Activated T-helper 2 cell treated with anti-CD3 and anti-CD28 coated beads, Interferon-gamma antibody, Interleukin-2, Interleukin-4, amounts not matched to agents 10 μg/mL and 5 μg/mL and 100 μg/mL, durations not matched to agents 14 hours and 24 hours and 36 hours (primary cell): ENCODE measurements at regions of chr6 and their contacts with region 1.

Region 1: GRCh38 chr6:169654598-169655391 is 47.0 kb downstream of the WDR27 start:
- DNase-seq: peak; percentile 71
- H3K4me3 Mint-ChIP-seq: peak overlapping the region; percentile 87
- H3K27ac Mint-ChIP-seq: peak overlapping the region; percentile 64
- H3K4me1 Mint-ChIP-seq: peaks cover 6% of the 10 kb centered on the region
- H3K27me3 Mint-ChIP-seq: no peaks in the 10 kb centered on the region

Region 2: DNA sequence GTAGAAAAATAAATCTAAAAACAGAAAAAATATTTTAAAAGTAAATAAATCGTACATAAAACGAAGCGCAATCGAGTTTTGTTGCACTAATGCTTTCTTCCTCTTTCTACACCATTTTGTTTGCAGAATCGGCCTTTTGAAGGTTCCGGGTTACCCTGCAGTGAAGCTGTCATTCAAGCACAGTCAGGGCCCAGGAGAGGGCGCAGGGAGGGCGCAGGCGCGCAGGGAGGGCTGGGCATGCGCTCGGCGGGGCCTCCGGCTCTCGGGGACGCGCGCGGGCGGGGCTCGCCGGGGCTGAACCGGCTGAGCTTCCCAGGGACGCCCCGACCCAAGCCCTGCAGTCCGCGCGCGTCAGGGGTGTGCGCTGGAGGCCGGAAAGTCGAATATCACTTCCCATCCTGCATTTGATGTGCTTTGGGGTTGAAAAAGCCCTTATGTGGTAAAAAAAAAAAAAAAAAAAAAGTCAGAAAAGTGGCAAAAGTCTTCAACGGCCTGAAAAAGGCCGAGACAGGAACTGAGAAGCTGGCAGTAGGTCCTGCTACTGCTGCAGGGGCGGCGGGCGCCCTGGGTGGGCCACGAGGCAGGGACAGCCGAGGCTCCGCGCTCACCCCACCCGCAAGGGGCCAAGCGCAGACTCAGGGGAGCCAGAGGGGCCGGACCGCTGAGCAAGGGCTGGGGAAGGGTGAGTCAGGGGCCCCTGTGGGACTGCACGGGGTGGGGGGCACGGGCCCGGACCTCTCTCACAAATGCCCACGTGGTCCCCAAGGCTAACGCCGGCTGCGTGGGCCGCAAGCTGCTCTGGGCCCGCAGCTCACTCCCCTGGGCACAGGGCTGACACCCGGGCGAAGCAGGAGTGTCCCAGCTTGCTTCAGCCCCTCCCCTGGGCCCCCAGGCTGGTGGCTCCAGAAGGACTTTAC is 441.6 kb before region 1 on chr6:
- intact Hi-C with region 1: loop called (anchors 1 kb)
- DNase-seq: peak; percentile 87
- H3K4me3 Mint-ChIP-seq: peak overlapping the region; percentile 58
- H3K27ac Mint-ChIP-seq: peak overlapping the region; percentile 52
- H3K4me1 Mint-ChIP-seq: peaks cover 17% of the 10 kb centered on the region
- H3K27me3 Mint-ChIP-seq: peaks cover 3% of the 10 kb centered on the region

Region 3: GRCh38 chr6:169556758-169557548 is 97.8 kb before region 1 on chr6:
- intact Hi-C with region 1: loop called (anchors 10 kb)
- DNase-seq: peak; percentile 36
- H3K4me3 Mint-ChIP-seq: no peak overlapping the region
- H3K27ac Mint-ChIP-seq: peak overlapping the region; percentile 40
- H3K4me1 Mint-ChIP-seq: peaks cover 21% of the 10 kb centered on the region
- H3K27me3 Mint-ChIP-seq: peaks cover 19% of the 10 kb centered on the region

Region 4: GRCh38 chr6:169669889-169670288 is 15.1 kb after region 1 on chr6:
- intact Hi-C with region 1: no loop called
- DNase-seq: no peak
- H3K4me3 Mint-ChIP-seq: no peak overlapping the region
- H3K27ac Mint-ChIP-seq: no peak overlapping the region
- H3K4me1 Mint-ChIP-seq: peaks cover 7% of the 10 kb centered on the region
- H3K27me3 Mint-ChIP-seq: no peaks in the 10 kb centered on the region